ENCODE measurements at regions of chr7 and their contacts with region 1.

Region 1: DNA sequence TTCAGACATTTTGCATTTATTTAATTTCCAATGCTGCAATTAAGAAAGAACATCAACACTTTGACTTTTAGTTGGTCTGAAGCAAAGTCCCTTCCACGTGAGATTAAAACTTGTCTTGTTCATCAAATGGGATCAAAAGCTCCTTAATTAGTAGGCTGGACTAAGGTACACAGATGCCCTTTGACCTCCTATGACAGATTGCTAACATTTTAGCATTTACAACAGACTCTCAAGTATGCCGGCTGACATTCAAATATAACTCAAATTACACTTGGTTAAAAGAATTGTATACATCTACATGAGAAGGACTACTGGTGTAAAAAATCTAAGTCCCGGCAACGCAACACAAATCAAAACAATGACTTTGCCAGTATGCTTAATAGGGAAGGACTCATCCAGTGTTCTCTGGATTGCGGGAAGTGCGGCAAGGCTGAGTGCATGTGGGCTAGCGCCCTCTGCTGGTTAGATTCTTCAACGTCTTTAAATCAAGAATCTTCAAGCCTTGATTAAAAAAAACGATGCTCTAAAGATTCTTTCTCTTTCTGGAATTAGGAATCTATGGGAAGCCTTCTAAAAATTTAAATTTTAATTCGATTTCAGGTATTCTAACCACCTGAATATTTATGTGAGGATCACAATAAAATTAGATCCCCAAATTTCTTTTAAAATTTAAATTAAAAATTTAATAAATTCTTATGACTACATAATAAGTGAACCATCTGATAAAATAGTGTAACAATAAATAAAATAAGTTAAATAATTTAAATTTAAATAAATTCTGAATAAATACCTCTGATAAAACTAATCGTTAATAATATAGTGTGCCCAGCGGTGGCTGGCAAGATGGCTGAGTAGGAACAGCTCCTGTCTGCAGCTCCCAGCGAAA is 444.7 kb downstream of the DGKB start:
- DNase-seq: peak; percentile 68
- ATAC-seq: peak; percentile 79

Region 2: GRCh38 chr7:13524076-13524475 is 933.7 kb before region 1 on chr7:
- intact Hi-C with region 1: loop called (anchors 10 kb)
- DNase-seq: no peak
- ATAC-seq: no peak

Region 3: DNA sequence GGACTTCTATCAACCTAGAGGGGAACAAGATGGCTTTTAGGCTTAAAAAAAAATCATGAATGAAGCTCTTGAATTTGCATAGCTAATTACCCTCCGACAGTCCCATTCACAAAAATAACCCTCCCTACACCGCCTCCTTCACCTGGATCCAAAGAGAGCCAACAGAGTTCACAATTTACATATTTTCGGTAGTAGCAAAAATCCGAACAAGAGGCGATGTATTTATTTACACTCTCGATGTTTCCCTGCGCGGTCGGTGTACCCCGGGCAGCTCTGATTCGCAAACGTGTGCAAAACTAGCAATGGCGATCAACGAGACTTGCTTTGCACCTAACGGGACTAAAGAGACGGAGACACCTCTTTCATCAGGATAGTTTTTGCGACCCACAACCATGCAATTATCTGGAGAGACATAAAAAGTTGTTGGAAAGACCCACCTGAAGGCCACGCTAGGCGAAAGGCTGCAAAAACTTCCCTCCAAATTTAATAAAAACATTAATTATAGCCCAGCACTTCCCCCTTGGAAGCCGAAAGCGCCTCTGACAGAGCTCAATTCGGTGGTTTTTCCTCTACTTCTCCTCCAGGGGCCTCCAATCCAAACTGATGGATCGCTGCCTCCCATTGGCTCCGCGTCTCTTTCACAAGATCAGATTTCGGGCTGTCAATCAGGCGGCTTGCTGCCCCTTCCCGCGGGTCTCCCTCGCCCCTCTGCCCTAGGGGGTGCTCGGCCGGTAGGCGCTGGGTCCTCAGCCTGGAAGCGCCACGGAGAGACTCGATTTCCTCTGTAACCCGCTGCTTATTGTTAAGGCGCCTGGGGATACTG is 468.5 kb before region 1 on chr7 and contains the start of gene ETV1:
- intact Hi-C with region 1: loop called (anchors 10 kb)
- DNase-seq: peak; percentile 71
- ATAC-seq: peak; percentile 66
- total RNA-seq, gene ETV1: 29.8 TPM

Region 4: GRCh38 chr7:14228341-14228740 is 229.5 kb before region 1 on chr7:
- intact Hi-C with region 1: no loop called
- DNase-seq: no peak
- ATAC-seq: no peak